ENCODE measurements at regions of chr14 and their contacts with region 1.

Region 1: DNA sequence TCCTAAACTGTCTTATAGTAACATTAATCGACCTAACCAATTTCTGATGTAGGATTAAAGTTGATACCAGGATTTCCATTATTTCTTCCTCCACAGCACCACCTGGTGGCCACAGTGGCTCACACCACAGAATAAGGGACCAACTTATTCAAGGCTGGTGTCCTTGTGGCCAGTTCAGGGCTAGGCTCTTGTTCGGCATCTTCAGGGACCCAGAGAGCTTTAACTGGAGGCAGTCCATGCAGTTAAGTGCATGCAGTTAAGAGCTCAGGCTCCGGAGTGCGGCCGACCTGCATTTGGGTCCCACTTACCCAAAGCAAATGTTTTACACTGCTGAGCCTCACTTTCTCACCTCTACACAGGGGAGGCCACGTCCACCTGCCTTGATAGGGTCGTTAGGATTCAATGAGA is 42.0 kb upstream of the GPR68 start:
- DNase-seq: peak; percentile 69 to 95 (median 79)
- H3K4me3 ChIP-seq: no peak overlapping the region
- H3K27ac ChIP-seq: no peak overlapping the region
- H3K4me1 ChIP-seq: no peaks in the 10 kb centered on the region
- H3K27me3 ChIP-seq: no peaks in the 10 kb centered on the region
- CTCF ChIP-seq: peak; percentile 86 to 94 (median 92)
- POLR2A ChIP-seq: no peak

Region 2: DNA sequence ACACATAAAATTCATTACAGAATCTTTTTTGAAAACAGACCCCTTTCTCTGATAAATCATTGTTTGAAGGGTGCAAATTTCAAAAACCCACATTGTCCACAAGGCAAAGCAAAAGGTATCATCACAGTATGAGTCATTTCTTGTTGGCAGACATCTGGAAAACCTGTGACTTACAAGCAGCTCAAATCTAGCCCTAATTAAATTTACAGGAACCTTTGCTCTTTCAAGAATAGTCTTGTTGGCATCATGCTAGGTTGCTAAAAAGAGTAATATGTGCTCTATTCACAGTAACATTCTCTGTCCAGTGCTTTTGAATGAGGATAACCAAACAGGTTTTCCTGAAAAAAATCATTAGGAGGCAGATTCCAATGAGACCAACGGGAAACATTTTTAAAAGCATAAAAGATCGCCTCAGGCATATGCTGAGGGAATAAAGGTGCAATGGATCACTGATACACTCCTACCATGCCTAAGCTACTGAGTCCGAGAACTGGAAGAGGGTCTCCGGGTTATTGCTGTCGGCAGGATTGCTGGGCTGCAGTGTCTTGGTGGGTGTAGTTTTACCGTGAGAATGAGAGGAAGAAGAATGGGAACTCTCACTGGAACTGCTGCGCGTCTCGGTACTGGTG is 414.8 kb before region 1 on chr14:
- intact Hi-C with region 1: no loop called
- DNase-seq: no peak
- H3K4me3 ChIP-seq: no peak overlapping the region
- H3K27ac ChIP-seq: no peak overlapping the region
- H3K4me1 ChIP-seq: no peaks in the 10 kb centered on the region
- H3K27me3 ChIP-seq: no peaks in the 10 kb centered on the region
- CTCF ChIP-seq: no peak
- POLR2A ChIP-seq: no peak

Region 3: DNA sequence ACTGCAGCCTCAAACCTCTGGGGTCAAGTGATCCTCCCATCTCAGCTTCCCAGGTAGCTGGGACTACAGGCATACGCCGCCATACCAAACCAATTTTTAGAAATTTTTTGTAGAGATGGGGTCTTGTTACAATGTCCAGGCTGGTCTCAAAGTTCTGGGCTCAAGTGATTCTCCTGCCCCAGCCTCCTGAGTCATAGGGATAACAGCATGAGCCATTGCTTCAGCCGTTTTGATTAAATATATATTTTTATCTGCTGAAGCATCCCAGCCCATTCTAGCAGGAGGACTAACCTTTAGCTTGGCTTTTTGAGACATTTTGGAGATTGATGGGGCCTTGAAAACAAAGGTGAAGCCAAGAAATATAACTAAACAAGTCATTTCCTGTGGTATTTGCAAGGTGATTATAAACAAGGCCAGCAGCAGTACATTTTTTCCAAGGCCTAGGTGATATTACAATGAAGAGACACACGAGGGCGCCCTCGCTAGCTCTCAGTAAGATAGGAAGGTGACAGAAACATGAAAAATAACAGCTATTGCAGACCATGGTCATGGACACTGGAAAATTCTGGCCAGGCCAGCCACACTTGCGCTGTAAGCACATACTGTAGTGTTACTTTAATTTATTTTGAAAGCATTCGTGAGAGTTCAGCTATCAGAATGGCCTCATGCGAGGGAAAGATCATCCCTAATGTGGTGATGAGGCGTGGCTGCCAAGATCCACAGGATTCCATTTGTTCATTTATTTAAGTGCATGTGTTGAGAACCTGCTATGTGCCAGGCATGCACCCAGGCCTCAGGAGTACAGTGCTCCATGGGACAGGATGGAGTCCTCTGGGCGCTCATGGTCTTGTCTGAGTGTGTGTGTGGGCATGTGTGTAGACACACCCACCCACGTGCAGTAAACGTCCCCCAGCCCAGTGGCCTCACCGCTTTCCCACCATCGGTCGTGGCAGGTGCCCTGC is 109.2 kb before region 1 on chr14:
- intact Hi-C with region 1: loop called (anchors 5 kb)
- DNase-seq: peak; percentile 39 to 85 (median 64)
- H3K4me3 ChIP-seq: no peak overlapping the region
- H3K27ac ChIP-seq: no peak overlapping the region
- H3K4me1 ChIP-seq: no peaks in the 10 kb centered on the region
- H3K27me3 ChIP-seq: no peaks in the 10 kb centered on the region
- CTCF ChIP-seq: peak; percentile 61 to 83 (median 76)
- POLR2A ChIP-seq: no peak